ENCODE measurements at regions of chr1 and their contacts with region 1.

Region 1: GRCh38 chr1:168069384-168069783 is 67.3 kb downstream of the GPR161 start:
- DNase-seq: no peak
- ATAC-seq: no peak
- H3K4me3 ChIP-seq: no peak overlapping the region
- H3K27ac ChIP-seq: no peak overlapping the region
- H3K4me1 ChIP-seq: no peaks in the 10 kb centered on the region
- H3K27me3 ChIP-seq: no peaks in the 10 kb centered on the region
- CTCF ChIP-seq: no peak

Region 2: DNA sequence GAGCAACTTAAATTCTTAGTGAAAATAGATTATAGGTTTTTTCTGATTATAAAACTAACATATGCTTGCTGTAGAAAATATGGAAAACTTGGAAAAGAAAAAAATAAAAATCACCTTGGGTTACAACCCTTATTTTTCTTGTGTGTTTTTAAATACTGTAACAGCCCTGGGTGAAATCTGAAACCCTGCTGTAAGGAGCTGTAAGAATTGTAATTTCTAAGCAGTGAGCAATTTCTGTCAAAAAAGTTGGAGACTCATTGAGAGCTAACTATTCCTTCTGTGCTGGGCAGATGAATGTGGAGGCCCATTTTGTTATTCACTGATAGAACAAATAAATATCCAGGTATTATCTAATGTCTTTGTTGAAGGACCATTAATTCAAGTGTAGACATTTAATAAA is 198.1 kb before region 1 on chr1:
- CTCF ChIA-PET with region 1: no interaction called
- POLR2A ChIA-PET with region 1: no interaction called
- in situ Hi-C with region 1: no loop called
- intact Hi-C with region 1: no loop called
- DNase-seq: no peak
- ATAC-seq: no peak
- H3K4me3 ChIP-seq: no peak overlapping the region
- H3K27ac ChIP-seq: no peak overlapping the region
- H3K4me1 ChIP-seq: no peaks in the 10 kb centered on the region
- H3K27me3 ChIP-seq: no peaks in the 10 kb centered on the region
- CTCF ChIP-seq: no peak

Region 3: DNA sequence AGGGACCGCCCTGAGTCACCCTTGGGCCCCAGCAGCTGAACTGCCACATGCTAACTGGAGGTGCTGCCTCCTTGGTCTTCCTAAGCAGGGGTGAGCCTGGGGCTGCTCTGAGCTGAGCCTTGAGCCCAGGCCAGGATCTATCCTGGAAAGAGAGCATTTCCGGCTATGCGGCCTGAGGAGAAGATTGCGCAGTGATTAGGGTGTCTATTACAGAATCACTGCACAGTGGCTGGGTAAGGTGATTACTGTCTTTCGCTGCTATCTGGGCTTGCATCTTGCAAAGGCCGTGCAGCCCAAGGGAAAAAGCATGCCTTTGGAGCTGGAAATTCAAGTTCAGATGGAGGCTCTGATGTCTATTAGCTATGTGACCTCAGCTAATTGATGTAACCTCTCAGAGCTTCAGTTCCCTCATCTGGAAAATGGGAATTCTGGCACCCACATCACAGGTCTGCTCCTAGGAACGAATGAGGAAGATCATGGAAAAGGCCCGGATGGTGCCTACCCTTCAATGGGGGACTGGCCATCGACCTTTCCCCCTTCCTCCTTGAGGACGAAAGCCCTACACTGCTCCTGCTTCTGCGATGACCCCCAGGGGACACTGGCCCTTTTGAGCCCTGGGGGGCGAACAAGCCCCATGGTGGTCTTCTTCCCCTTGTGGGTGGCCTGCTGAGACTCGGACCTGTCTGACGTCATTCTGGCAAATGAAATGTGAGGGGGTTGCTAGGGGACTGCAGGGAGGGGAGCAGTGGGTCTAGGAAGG is 29.4 kb after region 1 on chr1:
- CTCF ChIA-PET with region 1: interaction called, 10 read pairs
- POLR2A ChIA-PET with region 1: no interaction called
- in situ Hi-C with region 1: no loop called
- intact Hi-C with region 1: no loop called
- DNase-seq: no peak
- ATAC-seq: no peak
- H3K4me3 ChIP-seq: no peak overlapping the region
- H3K27ac ChIP-seq: no peak overlapping the region
- H3K4me1 ChIP-seq: no peaks in the 10 kb centered on the region
- H3K27me3 ChIP-seq: peaks cover 3% of the 10 kb centered on the region; the same call in 1 of the 2 replicates
- CTCF ChIP-seq: no peak

Region 4: DNA sequence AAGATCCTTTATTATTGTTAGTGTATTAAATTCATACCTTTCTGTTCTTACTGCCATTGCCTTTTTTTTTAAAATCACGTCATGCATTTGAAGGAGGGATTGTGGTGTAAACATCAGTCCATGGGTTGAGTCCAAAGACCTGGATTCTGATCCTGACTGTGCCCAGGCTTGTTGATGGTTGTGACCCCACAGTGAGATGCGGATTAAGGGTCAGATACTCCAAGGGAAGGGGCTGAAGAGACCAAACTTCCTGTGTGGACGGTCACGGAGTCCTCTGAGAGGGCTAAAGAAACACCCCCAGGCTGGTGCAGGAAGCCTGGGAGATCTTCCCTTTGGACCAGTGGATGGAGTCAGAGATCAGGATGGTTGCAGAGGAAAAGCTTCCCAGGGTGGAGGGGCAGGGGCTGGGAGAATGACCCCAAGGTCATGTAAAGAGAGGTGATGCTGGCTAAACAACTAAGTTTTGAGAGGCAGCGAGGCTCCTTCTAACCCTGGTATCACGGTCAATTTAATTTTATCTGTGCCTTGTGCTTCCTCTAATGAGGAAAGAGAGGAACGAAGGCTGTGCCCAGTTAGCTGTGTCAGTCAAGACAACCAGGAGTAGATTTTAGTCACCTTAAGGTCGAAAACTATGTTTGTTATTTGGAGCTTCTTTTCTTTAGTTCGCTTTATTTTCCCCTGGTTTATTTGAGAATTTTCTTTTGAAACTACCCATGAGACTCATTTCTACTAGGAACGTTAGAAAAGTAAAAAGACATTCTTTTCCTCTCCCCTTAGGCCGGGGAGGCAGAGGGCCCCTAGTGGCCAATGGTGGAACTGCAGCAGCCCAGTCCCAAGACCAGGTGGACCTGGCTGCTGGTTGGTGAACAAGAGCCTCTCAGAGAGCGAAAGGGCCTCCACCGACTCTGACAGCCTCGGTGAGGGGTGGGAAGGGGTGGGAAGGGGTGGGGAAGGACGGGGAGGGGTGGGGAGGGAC is 76.1 kb after region 1 on chr1:
- CTCF ChIA-PET with region 1: no interaction called
- POLR2A ChIA-PET with region 1: no interaction called
- in situ Hi-C with region 1: no loop called
- intact Hi-C with region 1: no loop called
- DNase-seq: peak; percentile 55
- ATAC-seq: peak; percentile 100
- H3K4me3 ChIP-seq: no peak overlapping the region
- H3K27ac ChIP-seq: no peak overlapping the region
- H3K4me1 ChIP-seq: no peaks in the 10 kb centered on the region
- H3K27me3 ChIP-seq: no peaks in the 10 kb centered on the region; the same call in 1 of the 2 replicates
- CTCF ChIP-seq: peak; percentile 93